A549 (cell line): ENCODE measurements at regions of chr6 and their contacts with region 1.

Region 1: DNA sequence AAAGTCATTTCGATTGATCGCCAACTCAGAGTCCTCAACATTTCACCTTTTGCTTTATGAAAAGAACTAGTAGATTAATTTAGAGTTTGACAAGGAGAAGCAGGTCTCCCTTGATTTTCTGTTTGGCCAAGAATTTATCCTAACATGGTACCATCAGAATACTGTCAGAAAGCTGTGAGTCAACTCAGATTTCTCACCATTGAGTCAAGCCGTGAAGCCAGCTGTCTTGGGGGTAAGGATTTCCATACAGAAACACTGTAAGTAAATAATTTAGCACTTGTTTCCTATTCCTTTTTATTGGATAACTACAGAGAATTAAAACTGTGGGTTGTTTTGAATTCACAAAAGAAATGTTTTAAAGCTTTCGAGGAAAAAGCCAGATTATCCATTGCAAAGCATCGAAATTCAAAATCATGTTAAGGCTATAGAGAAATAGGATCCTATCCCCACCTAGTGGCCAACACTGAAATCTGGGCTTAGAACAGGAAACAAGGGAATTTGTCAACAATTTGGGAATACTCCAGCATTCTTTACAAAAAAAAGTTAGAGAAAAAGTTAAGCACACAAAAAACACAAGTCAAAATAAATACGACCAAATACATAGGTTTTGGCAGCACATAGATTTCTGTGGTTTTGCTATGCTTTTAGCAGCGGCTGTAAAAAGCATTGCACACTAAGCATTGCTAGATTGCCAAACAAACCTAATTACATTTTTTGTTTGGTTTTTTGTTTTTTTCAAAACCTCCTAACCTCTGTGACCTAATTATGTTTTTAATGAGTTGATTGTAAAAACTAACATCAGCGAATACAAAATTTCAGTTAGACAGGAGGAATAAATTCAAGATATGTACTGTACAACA is 44.2 kb downstream of the COL11A2 start:
- DNase-seq: peak in 1 of 2 experiments; percentile 46
- ATAC-seq: peak in 1 of 2 experiments; percentile 70; a peak in 3 of 6 replicates
- H3K4me3 ChIP-seq: no peak overlapping the region
- H3K27ac ChIP-seq: no peak overlapping the region
- H3K4me1 ChIP-seq: no peaks in the 10 kb centered on the region
- CTCF ChIP-seq: peak; percentile 57
- EP300 ChIP-seq: no peak
- POLR2A ChIP-seq: no peak
- RAD21 ChIP-seq: peak; percentile 54 to 58

Region 2: DNA sequence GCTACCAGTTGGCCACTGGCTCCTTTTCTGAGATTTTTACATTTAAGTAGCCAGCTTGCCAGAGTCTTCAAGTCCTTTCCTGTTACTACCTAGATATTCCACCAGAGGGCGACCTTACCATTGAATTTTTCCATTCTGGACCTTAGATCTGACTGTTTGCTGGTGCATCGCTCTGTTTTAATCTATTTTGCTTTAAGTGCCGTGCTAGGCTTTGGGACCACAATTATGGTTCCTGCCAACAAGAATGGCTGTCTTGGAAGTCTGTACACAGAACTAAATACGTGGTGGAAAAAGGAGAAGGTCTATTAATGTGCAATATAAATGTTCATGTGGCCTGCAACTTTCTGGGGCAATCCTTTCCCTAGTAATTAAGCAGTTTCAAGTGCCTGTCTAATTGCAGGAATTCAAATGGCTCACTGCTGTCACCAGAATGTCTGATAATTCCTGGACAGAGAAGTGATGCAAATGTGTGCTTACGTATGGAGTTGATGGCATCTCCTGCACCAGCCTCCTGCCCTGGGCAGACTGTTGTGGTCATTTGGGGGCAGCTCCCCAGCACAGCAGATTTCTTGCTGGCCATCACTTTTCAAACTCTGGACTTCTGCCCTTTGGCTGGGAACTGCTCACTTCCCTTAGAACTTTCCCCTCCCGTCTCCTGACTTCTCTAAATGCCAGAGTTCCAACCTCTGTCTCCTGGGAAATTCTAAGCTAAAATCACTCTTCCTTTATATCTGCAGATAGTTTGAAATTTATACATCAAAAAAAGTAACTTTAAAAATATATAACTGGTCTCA is 133.0 kb before region 1 on chr6:
- CTCF ChIA-PET with region 1: interaction called, 25 read pairs
- POLR2A ChIA-PET with region 1: no interaction called
- DNase-seq: peak; percentile 47 to 75
- ATAC-seq: peak; percentile 61 to 85; a peak in 5 of 6 replicates
- H3K4me3 ChIP-seq: no peak overlapping the region
- H3K27ac ChIP-seq: no peak overlapping the region
- H3K4me1 ChIP-seq: no peaks in the 10 kb centered on the region
- CTCF ChIP-seq: peak; percentile 59
- EP300 ChIP-seq: no peak
- POLR2A ChIP-seq: no peak
- RAD21 ChIP-seq: peak; percentile 57 to 62

Region 3: GRCh38 chr6:33075568-33076405 is 72.2 kb before region 1 on chr6 and contains the start of gene HLA-DPB1:
- CTCF ChIA-PET with region 1: no interaction called
- POLR2A ChIA-PET with region 1: no interaction called
- DNase-seq: peak; percentile 28 to 36
- ATAC-seq: peak; percentile 81 to 96
- H3K4me3 ChIP-seq: no peak within 1 kb of the TSS
- H3K27ac ChIP-seq: no peak within 1 kb of the TSS
- H3K4me1 ChIP-seq: no peaks in the 10 kb centered on the region
- CTCF ChIP-seq: no peak
- EP300 ChIP-seq: no peak
- POLR2A ChIP-seq: no peak
- RAD21 ChIP-seq: no peak
- polyA plus RNA-seq, gene HLA-DPB1: not detected in 2 replicates

Region 4: GRCh38 chr6:33118525-33119123 is 29.4 kb before region 1 on chr6:
- CTCF ChIA-PET with region 1: interaction called, 27 read pairs
- POLR2A ChIA-PET with region 1: interaction called, 4 read pairs
- DNase-seq: peak in 1 of 2 experiments; percentile 46
- ATAC-seq: peak in 1 of 2 experiments; percentile 47; a peak in 2 of 6 replicates
- H3K4me3 ChIP-seq: no peak overlapping the region
- H3K27ac ChIP-seq: no peak overlapping the region
- H3K4me1 ChIP-seq: no peaks in the 10 kb centered on the region
- CTCF ChIP-seq: peak; percentile 61
- EP300 ChIP-seq: no peak
- POLR2A ChIP-seq: no peak
- RAD21 ChIP-seq: peak; percentile 40 to 46; a peak in 3 of 5 replicates

Region 5: DNA sequence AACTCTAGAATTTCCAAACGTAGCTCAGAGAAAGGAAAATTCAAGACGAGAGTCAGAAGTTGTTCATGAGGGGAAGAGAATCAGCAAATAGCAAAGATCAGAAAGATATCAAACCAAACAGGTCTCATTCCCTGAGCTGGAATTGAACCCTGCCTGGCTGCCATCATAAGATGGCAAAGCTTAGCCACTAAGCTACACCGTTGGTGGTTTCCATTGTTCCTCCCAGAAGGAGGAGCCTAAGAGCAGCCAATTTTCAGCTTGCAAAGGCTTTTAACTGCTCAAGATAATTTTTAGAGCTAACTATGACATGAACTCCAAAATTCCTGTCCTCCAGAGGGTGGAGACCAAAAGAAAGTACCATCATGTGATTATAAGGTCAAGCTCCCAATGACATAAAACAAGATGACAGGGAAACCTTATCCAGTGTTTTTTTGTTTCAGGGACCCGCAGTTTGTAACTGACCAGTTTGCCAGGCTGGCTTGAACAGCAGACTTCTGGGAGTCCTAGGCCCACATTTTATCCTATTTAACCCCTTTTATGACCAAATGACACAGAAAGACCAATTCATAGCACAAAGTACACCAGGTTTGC is 11.6 kb before region 1 on chr6:
- CTCF ChIA-PET with region 1: interaction called, 26 read pairs
- POLR2A ChIA-PET with region 1: no interaction called
- DNase-seq: no peak
- ATAC-seq: no peak
- H3K4me3 ChIP-seq: no peak overlapping the region
- H3K27ac ChIP-seq: no peak overlapping the region
- H3K4me1 ChIP-seq: no peaks in the 10 kb centered on the region
- CTCF ChIP-seq: no peak
- EP300 ChIP-seq: no peak
- POLR2A ChIP-seq: no peak
- RAD21 ChIP-seq: no peak

Region 6: DNA sequence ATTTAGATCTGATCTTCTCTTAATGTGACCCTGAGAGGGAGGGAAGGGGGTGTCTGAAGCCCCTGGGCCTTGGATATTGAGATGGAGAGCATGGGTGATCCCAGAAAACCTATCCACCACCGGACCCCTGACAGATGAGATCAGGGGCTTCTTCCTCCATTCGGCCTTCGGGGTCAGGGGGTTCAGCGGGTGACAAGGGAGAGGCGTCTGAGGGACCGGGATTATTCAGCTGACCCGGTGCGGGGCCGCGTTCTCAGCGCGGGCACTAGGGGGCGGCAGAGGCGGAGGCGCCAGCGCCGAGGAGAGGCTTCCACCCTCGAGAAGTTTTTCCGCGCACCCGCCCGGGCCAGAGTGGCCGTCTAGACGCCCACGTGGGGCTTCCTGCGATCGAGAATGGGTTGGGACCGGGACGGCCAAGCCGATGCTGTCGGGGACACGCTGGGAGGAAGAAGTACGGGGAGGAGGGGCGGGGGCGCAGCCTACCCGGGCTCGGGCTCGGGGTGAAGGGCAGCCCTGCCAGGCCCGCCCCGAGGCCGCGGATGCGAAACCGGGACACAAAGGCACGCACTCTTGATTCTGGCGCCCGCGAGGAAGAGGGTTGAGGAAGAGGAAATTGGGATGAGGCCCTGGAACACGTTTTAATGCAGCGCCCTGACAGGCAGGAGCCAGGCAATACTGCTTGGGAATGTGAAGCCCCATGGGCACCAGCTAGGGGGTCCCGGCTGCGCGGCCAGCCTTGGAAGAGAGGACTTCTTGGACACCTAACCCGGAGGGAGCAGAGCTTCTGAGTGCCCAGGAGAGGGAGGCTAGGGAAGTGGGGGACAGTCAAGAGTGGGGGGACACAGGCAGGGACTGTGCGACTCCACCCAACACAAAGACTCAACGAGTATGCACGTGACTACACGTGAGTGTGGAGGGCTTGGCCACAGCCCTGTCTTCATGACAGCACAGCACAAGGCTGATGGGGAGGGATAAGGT is 13.6 kb after region 1 on chr6:
- CTCF ChIA-PET with region 1: interaction called, 39 read pairs
- POLR2A ChIA-PET with region 1: no interaction called
- DNase-seq: peak; percentile 37 to 74
- ATAC-seq: peak; percentile 87 to 94
- H3K4me3 ChIP-seq: peak overlapping the region; percentile 49
- H3K27ac ChIP-seq: peak overlapping the region; percentile 78 to 91
- H3K4me1 ChIP-seq: peaks cover 14% of the 10 kb centered on the region; the same call in 2 of the 3 replicates
- CTCF ChIP-seq: peak; percentile 72
- EP300 ChIP-seq: no peak
- POLR2A ChIP-seq: no peak
- RAD21 ChIP-seq: peak; percentile 35 to 55; a peak in 3 of 5 replicates